Activated T-helper 1 cell treated with anti-CD3 and anti-CD28 coated beads, Interleukin-12 subunit alpha, Interleukin-12 subunit beta, Interleukin-2, Interleukin-4 antibody, amounts not matched to agents 30 ng/mL and 10 ng/mL and 1 ng/mL, durations not matched to agents 14 hours and 24 hours and 36 hours (primary cell): ENCODE measurements at regions of chr12 and their contacts with region 1.

Region 1: DNA sequence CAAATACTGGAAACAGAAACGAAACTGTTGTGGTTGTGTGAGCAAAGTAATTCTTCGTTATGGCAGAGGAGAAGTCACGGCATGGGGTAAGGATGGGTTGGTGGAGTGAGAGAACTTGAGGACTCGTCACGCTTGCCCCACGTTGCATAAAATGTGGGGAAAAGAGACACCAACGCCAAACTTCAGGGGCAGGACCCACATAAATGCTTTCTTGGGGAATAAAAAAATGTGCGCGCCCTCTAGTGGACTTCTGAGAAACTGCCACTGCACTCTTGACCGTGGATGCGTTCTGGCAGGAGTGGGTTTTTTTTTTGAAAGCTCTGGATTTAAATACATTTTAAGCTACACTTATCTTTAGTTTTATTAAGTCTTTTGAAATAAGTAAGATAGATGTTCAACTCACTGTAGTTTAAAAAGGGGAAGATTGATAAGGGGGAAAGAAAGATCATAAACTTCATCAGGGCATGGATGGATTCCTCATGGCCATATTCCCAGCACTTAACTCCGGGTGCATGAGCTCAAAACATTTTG is 4.1 kb upstream of the IGF1 start:
- DNase-seq: peak; percentile 42
- H3K4me3 Mint-ChIP-seq: peak overlapping the region; percentile 73
- H3K27ac Mint-ChIP-seq: peak overlapping the region; percentile 92
- H3K4me1 Mint-ChIP-seq: peaks cover 33% of the 10 kb centered on the region
- H3K27me3 Mint-ChIP-seq: no peaks in the 10 kb centered on the region

Region 2: GRCh38 chr12:101792051-101792931 is 692.2 kb before region 1 on chr12:
- intact Hi-C with region 1: loop called (anchors 5 kb)
- DNase-seq: no peak
- H3K4me3 Mint-ChIP-seq: no peak overlapping the region
- H3K27ac Mint-ChIP-seq: peak overlapping the region; percentile 77
- H3K4me1 Mint-ChIP-seq: peaks cover 51% of the 10 kb centered on the region
- H3K27me3 Mint-ChIP-seq: no peaks in the 10 kb centered on the region

Region 3: GRCh38 chr12:101939856-101940265 is 544.6 kb before region 1 on chr12:
- intact Hi-C with region 1: loop called (anchors 1 kb)
- DNase-seq: peak; percentile 45
- H3K4me3 Mint-ChIP-seq: no peak overlapping the region
- H3K27ac Mint-ChIP-seq: no peak overlapping the region
- H3K4me1 Mint-ChIP-seq: peaks cover 39% of the 10 kb centered on the region
- H3K27me3 Mint-ChIP-seq: peaks cover 8% of the 10 kb centered on the region

Region 4: DNA sequence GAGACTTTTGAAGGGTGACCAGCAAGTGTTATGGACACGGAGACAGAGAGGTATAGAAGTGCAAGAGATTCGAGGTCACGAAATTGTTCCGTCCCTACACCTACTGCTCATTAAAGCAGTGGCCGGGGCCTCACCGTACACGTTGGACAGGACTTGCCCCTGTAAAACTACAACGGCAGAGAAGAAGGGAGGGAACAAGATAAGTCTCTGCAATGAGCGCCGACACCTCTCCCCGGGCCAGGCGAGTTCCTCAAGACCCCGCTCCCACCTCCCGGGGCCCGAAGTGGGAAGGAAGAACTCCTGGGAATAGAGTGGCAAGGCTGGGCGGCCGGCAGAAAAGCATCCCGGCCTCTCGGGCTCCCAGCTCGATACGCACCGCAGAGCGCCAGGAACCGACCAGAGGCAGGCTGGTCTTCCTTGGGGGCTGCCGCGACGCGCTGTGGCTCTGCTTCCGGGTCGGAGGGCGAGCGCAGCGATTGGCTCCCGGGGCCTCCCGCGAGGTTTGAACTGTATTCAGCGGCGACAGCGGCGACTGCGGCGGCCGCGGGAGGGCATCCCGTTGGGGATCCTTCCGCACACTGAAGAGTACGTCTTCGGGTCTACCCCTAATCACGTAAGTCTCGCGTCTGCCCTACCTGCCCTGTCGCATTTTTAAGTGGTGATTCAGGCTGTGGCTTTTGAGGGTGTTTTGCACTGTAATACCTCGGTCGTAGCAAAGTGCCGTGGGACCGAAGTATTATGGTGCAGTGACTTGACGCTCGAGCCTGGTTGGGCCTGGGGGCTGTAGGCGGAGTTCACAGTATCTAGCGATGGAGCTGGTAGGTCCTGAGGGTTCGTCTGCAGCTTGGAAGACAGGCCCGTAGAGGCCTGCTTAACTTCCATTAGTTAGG is 364.6 kb before region 1 on chr12 and contains the starts of genes NUP37 and PARPBP:
- intact Hi-C with region 1: loop called (anchors 2 kb)
- DNase-seq: peak; percentile 92
- H3K4me3 Mint-ChIP-seq: peak within 1 kb of the TSS; percentile 92
- H3K27ac Mint-ChIP-seq: peak within 1 kb of the TSS; percentile 95
- H3K4me1 Mint-ChIP-seq: peaks cover 48% of the 10 kb centered on the region
- H3K27me3 Mint-ChIP-seq: no peaks in the 10 kb centered on the region
- total RNA-seq, gene NUP37: 81.5 and 84.1 TPM in 2 replicates
- total RNA-seq, gene PARPBP: 23.5 and 25.1 TPM in 2 replicates

Region 5: GRCh38 chr12:102300824-102301461 is 183.6 kb before region 1 on chr12:
- intact Hi-C with region 1: loop called (anchors 1 kb)
- DNase-seq: peak; percentile 28
- H3K4me3 Mint-ChIP-seq: no peak overlapping the region
- H3K27ac Mint-ChIP-seq: no peak overlapping the region
- H3K4me1 Mint-ChIP-seq: peaks cover 21% of the 10 kb centered on the region
- H3K27me3 Mint-ChIP-seq: peaks cover 9% of the 10 kb centered on the region

Region 6: DNA sequence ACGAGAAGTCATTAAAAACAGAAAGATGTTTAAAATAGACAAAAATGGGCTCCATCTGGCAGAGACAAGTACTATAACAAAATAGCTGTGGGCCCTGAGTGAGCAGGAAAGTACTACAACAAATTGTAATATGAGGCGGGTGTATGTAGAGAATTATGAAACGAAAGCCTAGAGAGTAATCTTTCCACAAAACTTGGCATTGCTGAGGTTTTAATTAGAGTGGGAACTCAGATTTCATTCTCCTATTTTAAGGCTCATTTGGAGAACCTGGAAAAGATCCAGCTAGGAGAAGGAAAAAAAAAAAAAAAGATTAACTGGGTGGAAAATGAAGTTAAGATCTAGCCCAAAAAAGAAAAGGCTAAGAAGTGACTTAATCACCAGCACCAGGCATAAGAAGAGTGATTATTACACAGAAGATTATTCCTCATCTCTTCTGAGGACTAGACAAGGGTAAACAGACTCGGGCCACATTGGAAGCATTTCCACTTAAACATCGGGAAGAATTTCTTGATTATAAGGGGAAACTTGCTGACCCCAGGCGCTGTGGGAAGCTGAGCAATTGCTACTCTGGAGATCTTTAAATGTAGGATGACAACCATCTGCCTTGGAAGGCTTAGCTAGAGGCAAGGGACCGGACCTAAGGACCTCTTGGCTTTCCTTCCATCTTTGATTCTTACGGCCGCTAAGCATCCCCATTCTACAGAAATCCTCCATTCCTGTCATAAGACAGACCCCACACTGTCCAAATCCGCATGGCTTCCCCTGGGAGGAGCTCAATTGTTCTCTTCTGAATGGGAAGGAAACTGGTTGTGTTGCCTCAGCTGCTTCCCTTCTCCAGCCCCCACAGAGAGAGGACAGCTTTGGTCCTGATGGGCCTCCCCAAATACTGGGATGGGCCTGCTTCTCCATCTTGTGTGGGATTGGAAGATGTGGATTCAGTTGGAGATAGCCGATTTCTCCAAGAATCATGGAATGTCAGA is 44.8 kb before region 1 on chr12:
- intact Hi-C with region 1: loop called (anchors 2 kb)
- DNase-seq: no peak
- H3K4me3 Mint-ChIP-seq: no peak overlapping the region
- H3K27ac Mint-ChIP-seq: no peak overlapping the region
- H3K4me1 Mint-ChIP-seq: peaks cover 4% of the 10 kb centered on the region
- H3K27me3 Mint-ChIP-seq: no peaks in the 10 kb centered on the region

Region 7: GRCh38 chr12:102740141-102740955 is 255.9 kb after region 1 on chr12:
- intact Hi-C with region 1: no loop called
- DNase-seq: no peak
- H3K4me3 Mint-ChIP-seq: no peak overlapping the region
- H3K27ac Mint-ChIP-seq: no peak overlapping the region
- H3K4me1 Mint-ChIP-seq: peaks cover 4% of the 10 kb centered on the region
- H3K27me3 Mint-ChIP-seq: peaks cover under 1% of the 10 kb centered on the region